ENCODE measurements at regions of chr19 and their contacts with region 1.

Region 1: GRCh38 chr19:38634757-38635482 is 12.5 kb upstream of the ACTN4 start:
- DNase-seq: peak; percentile 63 to 95
- H3K4me3 ChIP-seq: no peak overlapping the region
- CTCF ChIP-seq: peak in 2 of 3 donors; percentile 7 to 62
- POLR2A ChIP-seq: no peak

Region 2: DNA sequence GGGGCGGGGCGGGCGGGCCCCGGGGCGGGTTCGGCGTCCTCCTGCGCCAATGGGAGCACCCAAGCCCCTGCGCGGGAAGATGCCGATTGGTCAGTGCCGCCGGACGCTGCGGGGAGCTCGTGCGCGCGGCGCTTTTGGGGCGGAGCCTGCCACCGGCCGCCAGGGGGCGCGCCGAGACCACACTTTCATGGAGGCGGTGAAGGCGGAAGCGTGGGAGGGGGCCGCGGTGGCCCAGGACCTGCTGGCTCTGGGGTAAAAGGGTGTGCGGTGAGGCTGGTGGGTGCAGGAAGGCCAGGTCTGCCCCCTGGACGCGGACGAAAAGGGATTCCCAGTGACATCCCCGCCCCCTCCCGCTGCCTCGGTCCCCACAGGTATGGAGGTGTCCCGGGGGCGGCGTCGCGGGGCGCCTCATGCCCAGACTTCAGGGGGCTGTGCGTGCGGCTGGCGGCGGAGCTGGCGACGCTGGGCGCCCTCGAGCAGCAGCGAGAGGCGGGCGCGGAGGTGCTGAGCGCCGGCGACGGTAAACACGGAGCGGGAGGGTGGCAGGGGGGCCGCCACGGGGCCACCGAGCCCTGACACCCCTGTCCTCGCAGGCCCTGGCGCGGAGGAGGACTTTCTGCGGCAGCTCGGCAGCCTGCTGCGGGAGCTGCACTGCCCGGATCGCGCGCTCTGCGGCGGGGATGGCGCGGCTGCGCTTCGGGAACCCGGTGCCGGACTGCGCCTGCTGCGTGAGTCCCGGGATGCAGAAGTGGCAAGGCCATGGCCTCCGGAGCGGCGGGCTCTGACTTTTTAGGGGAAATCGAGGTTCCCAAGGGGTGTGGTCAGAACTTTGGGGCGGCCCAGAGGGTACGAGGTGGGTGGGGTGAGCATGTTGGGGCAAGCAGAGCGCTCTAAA is 231.7 kb before region 1 on chr19 and contains the start of gene FAM98C:
- intact Hi-C with region 1: loop called (anchors 10 kb)
- DNase-seq: peak; percentile 94 to 99
- H3K4me3 ChIP-seq: peak within 1 kb of the TSS; percentile 75
- CTCF ChIP-seq: peak in 1 of 3 donors; percentile 76
- POLR2A ChIP-seq: no peak
- total RNA-seq, gene FAM98C: 53.6 to 68.5 (median 60.7) TPM

Region 3: DNA sequence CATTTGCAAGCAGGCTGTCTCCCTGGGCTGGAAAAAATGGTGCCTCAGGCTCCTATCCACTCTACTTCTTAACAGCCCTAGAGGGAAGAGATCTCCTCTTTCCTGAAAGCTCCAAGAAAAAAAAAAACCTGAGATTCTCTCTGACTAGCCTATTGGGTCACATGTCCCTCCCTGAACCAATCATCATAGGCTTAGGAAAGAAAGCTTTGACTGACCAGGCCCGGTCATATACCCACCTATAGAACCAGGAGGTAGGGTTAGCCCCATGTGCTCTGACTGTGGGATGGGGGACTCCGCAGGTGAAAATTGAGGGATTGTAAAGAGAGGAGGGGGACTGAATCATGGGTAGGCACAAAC is 90.0 kb before region 1 on chr19:
- intact Hi-C with region 1: loop called (anchors 5 kb)
- DNase-seq: no peak
- H3K4me3 ChIP-seq: no peak overlapping the region
- CTCF ChIP-seq: no peak
- POLR2A ChIP-seq: no peak

Region 4: DNA sequence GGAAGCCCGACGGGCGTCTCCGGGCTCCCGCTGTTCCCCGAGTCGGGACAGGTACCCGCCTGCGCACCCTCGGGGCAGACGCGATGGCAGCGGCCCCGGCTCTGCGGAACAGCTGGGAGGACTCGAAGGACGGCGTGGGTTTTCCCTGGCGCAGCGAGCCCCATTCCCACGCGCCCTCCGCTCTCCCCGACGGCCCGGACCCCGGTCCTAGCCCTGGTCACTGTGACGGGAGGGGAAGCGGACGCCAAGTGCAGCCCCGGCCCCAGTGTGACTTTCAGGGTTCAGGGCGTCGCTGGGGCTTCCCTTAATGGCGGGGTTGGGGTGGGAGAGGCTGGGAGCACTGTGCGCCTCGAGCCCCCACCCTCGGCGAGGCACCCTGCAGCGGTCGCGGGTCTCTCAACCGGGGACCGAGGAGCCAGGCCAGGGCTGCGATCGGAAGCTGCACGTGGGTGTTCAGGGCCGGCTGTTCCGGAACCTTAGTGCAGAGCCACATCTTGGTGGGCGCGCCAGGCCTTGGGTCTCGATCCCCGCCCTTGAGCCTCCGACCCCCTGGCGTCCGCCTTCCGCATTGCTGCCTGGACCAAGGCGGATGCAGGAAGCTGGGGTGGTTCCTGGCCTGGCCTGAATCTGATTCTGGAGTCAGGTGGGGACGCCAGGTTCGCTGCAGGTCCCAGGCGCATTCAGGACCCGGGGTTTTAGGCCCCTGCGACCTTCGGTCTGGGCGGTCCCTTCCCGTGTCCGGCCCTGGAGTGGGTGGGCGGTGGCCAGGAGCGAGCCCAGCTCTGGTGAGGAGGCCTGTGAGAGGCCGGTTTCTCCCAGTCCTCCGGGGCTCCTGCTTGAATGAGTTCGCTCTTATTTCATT is 157.6 kb after region 1 on chr19:
- intact Hi-C with region 1: no loop called
- DNase-seq: peak in 1 of 2 donors; percentile 92
- H3K4me3 ChIP-seq: no peak overlapping the region
- CTCF ChIP-seq: no peak
- POLR2A ChIP-seq: no peak

Region 5: DNA sequence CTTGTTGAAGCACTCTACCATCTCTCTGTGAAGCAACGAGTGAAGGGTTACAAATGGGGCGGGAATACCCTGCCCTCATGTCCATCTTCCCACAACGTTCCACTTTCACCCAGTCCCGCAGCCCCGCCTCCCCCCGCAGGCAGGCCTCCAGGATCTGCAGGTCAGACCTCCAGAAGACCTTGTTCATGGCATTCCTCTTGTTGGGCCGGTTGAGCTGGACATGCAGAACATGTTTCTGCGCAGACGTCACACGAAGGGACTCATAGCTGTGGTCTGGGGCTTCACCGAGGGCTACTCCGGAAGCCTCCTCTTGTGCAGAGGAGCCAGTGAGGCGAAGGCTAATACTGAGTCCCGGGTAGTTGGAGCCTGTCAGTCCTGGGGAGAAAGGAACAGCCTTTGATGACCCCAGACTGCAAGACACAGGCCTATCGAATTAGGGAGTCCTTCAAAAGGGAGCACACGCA is 196.3 kb after region 1 on chr19:
- intact Hi-C with region 1: loop called (anchors 10 kb)
- DNase-seq: peak in 1 of 2 donors; percentile 56
- H3K4me3 ChIP-seq: peak overlapping the region; percentile 60
- CTCF ChIP-seq: no peak
- POLR2A ChIP-seq: no peak